Activated naive CD4-positive, alpha-beta T cell treated with anti-CD3 and anti-CD28 coated beads, Interleukin-2, amount 10 ng/mL, durations not matched to agents 7 days and 5 days (primary cell): ENCODE measurements at regions of chr17 and their contacts with region 1.

Region 1: DNA sequence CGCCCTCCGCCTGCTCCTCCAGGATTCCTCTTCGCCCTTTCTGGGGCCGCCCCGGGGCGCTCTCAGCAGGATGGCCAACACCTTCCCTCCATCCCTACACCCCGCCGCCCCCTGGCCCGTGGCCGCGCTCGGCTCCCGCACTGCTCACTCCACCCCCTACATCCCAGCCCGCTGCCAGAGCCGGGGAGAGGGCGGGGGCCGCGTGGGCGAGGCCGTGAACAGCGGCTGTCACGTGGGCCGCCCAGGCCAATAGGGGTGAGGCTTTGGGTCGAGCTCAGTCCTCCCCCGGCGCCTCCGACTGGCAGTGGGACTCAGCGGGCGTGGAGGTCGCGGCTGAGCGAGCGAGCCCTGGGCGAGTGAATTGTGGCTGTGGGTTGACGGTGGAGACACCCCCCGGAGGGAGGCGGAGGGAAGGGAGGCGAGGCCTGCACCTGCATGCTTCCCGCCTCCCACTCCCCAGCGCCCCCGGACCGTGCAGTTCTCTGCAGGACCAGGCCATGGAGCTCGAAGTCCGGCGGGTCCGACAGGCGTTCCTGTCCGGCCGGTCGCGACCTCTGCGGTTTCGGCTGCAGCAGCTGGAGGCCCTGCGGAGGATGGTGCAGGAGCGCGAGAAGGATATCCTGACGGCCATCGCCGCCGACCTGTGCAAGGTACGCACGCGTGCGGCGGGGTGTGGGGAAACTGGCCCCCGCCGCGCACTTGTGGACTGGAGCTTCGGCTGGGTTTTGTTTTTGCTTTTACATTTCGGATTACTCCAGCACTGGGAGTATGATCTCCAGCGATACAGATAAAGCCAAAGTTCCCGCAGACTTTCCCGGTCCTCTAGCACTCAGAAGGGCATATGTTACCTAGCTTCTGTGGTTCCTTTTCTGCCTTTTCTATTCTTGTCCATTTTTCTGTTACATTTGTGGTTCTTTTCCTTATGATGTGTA is at the start of gene ALDH3A2:
- DNase-seq: peak; percentile 96
- H3K4me3 Mint-ChIP-seq: peak within 1 kb of the TSS; percentile 92
- H3K27ac Mint-ChIP-seq: peak within 1 kb of the TSS; percentile 85
- H3K4me1 Mint-ChIP-seq: peaks cover 38% of the 10 kb centered on the region
- H3K27me3 Mint-ChIP-seq: peaks cover 27% of the 10 kb centered on the region

Region 2: DNA sequence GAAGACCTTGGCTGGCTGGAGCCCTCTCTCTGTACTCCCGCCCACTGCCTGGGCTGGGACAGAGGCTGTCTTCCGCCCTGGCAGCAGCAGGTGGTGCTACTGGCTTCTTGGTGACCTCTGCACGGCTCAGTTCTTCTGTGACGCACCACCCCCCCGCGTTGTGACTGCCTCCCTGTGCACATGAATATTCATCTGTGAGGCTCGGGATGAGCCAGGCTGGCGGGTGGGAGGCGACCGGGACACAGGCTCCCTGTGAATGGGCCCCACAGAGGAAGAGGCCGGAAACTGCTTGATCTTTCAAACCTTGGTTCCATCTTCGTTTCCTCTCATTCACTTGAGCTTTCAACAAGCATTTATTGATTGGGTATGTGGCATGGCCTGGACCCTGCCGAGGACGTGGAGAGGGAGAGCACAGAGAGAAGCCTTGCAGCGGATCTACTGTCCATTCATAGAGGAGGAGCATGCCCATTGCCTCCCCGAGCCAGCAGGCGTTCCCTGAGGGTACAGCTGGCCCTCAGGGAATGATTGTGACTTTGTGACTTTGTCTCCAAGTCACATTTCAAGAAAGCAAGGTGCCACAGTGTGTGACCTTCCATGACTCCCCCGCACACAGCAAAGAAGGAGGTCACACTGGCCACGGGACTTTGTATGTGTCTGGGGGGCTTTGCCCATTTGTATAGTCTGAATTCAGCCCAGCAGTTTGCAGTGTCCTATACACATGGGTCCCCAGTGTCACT is 331.2 kb before region 1 on chr17:
- CTCF ChIA-PET with region 1: no interaction called
- DNase-seq: no peak
- H3K4me3 Mint-ChIP-seq: no peak overlapping the region
- H3K27ac Mint-ChIP-seq: no peak overlapping the region
- H3K4me1 Mint-ChIP-seq: no peaks in the 10 kb centered on the region
- H3K27me3 Mint-ChIP-seq: peaks cover 61% of the 10 kb centered on the region

Region 3: DNA sequence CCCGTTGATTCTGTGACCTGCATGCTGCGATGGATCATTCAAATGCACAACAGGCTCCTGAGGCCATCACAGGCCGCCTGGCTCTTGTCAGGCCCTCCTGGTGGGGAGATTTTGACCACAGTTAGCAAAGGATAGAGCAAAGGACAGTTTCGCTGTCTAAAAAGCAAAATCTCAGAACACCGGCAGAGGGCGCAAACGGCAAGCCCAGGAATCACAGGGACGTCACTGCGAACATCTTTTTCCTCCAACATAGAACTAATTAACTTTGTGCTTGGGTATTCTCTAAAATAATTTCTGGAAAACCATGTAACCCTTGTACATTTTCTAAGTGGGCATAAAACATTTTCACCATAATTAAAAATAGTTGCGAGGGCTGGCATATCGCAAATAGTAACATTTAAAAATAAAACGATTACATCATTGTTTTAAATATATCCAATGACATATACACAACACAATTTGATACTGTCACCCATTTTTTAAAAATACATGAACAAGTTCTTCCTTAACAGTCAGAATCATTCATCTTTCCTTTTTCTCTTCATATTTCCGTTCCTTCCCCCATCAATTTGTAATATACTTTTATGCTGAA is 134.7 kb before region 1 on chr17:
- CTCF ChIA-PET with region 1: interaction called, 23 read pairs
- DNase-seq: peak; percentile 77
- H3K4me3 Mint-ChIP-seq: no peak overlapping the region
- H3K27ac Mint-ChIP-seq: no peak overlapping the region
- H3K4me1 Mint-ChIP-seq: no peaks in the 10 kb centered on the region
- H3K27me3 Mint-ChIP-seq: peaks cover 25% of the 10 kb centered on the region